ENCODE measurements at regions of chr5 and their contacts with region 1.

Region 1: DNA sequence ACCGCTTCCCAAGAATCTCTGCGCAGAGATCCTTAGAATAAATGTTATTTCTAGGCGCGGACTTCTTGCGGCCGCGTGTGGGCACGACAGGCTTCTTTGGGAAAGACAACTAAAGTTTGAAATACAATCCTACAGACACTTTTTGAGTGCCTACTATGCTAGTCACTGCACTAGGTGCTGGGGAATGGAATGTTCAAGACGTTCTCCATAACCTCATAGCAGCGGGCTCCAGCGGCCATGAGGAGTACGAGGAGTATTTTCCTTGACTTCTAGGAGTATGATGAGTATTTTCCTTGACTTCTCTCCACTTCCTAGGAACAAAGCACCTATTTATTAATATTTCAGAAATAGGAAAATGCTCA is 636 bp upstream of the PWWP2A start:
- DNase-seq: no peak
- H3K4me3 ChIP-seq: peak overlapping the region; percentile 12
- H3K27ac ChIP-seq: no peak overlapping the region
- H3K4me1 ChIP-seq: no peaks in the 10 kb centered on the region
- H3K27me3 ChIP-seq: no peaks in the 10 kb centered on the region
- CTCF ChIP-seq: peak; percentile 24

Region 2: DNA sequence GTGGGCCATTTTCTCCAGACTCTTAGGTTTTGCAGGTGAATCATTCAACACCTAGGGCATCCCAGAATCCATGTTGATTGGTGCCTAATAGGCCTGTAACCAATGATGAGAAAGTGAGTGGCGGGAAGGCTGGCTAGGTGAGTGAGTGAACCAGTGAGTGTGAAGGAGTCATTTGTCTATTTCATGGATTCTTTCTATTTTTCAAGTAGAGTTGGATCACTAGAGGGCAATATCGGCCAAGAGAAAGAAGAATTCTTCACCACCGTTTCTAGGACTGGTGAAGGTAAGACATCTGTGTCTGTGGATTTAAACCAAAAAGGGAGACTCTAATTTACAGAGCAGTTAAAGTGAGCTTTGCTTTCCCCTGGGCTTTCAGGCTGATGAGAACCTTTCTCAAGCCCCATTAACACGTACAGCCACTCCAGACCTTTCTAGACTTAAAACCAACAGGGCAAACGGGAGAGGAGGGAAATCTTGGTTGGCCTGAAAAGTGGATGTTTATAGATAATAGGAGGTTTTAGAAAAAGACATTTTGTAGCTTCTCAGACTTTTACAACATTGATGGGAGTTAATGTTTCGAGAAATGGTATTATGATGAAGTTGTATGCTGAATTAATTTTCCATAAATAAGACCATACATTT is 675.3 kb before region 1 on chr5:
- intact Hi-C with region 1: loop called (anchors 10 kb)
- DNase-seq: no peak
- H3K4me3 ChIP-seq: no peak overlapping the region
- H3K27ac ChIP-seq: no peak overlapping the region
- H3K4me1 ChIP-seq: no peaks in the 10 kb centered on the region
- H3K27me3 ChIP-seq: no peaks in the 10 kb centered on the region
- CTCF ChIP-seq: no peak

Region 3: GRCh38 chr5:159669559-159669958 is 450.3 kb before region 1 on chr5:
- intact Hi-C with region 1: no loop called
- DNase-seq: no peak
- H3K4me3 ChIP-seq: no peak overlapping the region
- H3K27ac ChIP-seq: no peak overlapping the region
- H3K4me1 ChIP-seq: no peaks in the 10 kb centered on the region
- H3K27me3 ChIP-seq: no peaks in the 10 kb centered on the region
- CTCF ChIP-seq: no peak

Region 4: DNA sequence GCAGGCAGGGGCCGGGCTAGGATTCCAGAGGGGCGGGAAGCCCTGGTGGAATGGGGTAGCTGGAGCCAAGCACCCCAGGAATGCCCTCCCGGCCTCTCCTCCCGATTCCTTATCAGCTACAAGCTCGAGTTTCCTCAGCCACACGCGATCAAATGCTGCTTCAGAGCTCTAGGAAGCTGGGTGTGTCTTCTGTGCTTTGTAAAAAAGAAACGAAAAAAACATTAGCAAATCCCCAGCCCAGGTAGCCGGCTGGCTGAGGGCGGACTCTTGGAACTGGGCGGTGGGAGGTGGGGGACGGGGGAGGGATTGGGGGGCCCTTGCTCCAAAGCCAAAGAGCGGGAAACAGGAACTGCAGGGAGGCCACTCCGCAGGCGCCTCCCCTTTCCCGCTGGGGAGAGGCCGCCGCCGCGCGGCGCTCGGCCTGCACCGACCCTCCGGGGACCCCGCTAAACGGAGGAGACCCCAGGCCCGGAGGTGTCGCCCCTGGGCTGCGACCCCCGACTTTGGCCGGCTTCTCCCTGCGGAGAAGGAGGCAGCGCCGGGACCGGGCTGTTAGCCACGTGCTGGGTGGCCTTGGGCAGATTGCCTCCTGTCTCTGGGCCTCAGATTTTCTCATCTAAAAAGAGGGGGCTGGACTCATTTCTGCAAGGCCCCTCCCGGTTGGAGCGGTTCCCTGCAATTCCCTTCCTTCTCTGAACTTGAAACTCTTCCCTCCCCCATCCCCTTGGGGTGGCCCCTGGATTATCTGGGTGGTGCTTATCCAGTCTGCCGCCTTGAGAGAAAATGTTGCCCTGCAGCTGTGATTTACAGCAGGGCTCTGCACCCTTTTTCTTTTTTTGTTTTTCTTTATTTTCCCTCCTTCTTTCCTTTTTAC is 68.5 kb after region 1 on chr5:
- intact Hi-C with region 1: loop called (anchors 5 kb)
- DNase-seq: peak; percentile 75
- H3K4me3 ChIP-seq: peak overlapping the region; percentile 52
- H3K27ac ChIP-seq: peak overlapping the region; percentile 61
- H3K4me1 ChIP-seq: no peaks in the 10 kb centered on the region
- H3K27me3 ChIP-seq: no peaks in the 10 kb centered on the region
- CTCF ChIP-seq: no peak

Region 5: DNA sequence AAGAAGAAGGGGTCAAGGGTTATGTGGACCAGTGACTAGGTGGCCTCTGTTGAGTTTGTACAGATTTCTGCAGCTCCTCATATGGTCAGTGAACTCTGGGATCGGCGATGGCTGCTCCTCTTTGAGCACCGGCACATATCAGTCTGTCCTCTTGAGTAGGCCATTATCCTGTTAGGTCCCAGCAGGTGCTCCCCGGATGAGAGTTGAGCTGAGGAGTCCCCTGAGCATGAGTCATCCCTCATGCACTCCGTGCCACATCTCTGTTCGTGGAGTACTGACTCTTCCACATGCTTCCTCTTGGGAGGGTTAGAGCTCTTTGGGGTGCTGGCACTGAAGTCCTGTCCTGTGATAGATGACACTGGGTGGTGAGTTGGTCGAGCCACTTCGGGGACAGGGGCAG is 445.5 kb after region 1 on chr5:
- intact Hi-C with region 1: no loop called
- DNase-seq: no peak
- H3K4me3 ChIP-seq: no peak overlapping the region
- H3K27ac ChIP-seq: no peak overlapping the region
- H3K4me1 ChIP-seq: no peaks in the 10 kb centered on the region
- H3K27me3 ChIP-seq: no peaks in the 10 kb centered on the region
- CTCF ChIP-seq: no peak